ENCODE measurements at regions of chr19 and their contacts with region 1.

Region 1: DNA sequence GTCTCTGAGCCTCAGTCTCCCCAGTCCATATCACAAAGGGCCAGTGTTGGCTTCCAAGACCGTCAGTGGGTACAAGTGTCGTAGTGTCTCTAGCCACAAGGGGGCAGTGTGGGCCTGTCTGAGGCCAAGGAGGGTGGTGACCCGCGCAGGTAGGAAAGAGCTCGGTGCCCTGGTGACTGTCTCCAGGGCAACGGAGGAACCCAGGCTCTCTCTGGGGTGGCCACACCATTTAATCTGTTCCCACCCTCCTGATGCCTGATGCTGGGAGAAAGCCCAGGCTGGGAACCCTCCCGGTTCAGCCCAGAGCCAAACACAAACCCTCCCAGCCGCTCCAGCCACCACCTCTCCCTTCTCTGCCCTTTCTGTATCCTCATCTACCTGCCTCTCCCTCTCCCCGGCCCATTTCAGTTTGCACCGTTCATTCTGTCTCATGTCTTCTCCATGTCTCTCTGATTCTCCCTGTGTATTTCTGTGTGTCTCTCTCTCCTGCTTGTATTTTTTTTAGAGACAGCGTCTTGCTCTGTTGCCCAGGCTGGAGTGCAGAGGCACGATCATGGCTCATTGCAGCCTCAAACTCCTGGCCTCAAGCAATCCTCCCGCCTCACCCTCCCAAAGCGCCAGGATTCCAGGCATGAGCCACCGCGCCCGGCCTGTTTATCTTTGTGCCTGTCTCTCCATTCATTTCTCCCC is 17.5 kb upstream of the MEIS3 start:
- DNase-seq: no peak
- H3K4me3 ChIP-seq: no peak overlapping the region
- H3K27ac ChIP-seq: no peak overlapping the region
- H3K4me1 ChIP-seq: peaks cover 0 to 8% (median 0%) of the 10 kb centered on the region in 3 donors
- H3K27me3 ChIP-seq: peaks cover 0 to 89% (median 0%) of the 10 kb centered on the region in 4 donors
- CTCF ChIP-seq: peak; percentile 80 to 94 (median 90)
- POLR2A ChIP-seq: no peak

Region 2: DNA sequence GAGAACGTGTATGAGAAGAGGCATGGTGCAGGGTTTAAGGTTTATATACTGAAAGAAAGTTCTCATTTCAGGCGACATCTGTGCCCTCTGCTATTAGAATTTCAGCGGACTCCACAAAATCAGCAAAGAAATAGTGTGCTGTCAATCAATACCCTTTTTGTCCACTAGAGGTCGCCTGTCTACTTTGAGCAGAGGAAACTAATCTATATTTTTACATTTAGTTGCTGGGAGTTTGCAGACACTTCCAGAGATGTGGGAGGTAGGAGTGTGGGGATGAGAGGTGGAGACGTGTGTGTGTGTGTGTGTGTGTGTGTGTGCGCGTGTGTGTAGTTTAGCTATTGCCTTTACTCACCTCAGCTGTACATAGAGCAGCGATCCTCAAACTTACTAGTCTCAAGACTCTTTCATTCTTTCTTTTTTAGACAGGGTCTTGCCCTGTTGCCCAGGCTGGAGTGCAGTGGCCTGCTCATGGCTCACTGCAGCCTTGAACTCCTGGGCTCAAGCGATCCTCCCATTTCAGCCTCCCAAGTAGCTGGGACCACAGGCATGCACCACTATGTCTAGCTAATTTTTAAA is 152.4 kb before region 1 on chr19:
- intact Hi-C with region 1: no loop called
- DNase-seq: no peak
- H3K4me3 ChIP-seq: no peak overlapping the region
- H3K27ac ChIP-seq: no peak overlapping the region
- H3K4me1 ChIP-seq: peaks cover under 1 to 9% (median 5%) of the 10 kb centered on the region in 3 donors
- H3K27me3 ChIP-seq: no peaks in the 10 kb centered on the region
- CTCF ChIP-seq: peak; percentile 84 to 94 (median 92)
- POLR2A ChIP-seq: no peak

Region 3: GRCh38 chr19:47391510-47392223 is 45.2 kb before region 1 on chr19:
- intact Hi-C with region 1: no loop called
- DNase-seq: peak; percentile 21
- H3K4me3 ChIP-seq: no peak overlapping the region
- H3K27ac ChIP-seq: no peak overlapping the region
- H3K4me1 ChIP-seq: no peaks in the 10 kb centered on the region
- H3K27me3 ChIP-seq: no peaks in the 10 kb centered on the region
- CTCF ChIP-seq: peak; percentile 68 to 91 (median 82)
- POLR2A ChIP-seq: no peak

Region 4: GRCh38 chr19:47514869-47515588 is 78.2 kb after region 1 on chr19 and contains the start of gene NAPA:
- intact Hi-C with region 1: loop called (anchors 5 kb)
- DNase-seq: peak; percentile 100
- H3K4me3 ChIP-seq: peak within 1 kb of the TSS; percentile 79 to 99 (median 90)
- H3K27ac ChIP-seq: peak within 1 kb of the TSS; percentile 97 to 99 (median 98)
- H3K4me1 ChIP-seq: peaks cover 36 to 52% (median 41%) of the 10 kb centered on the region in 3 donors
- H3K27me3 ChIP-seq: no peaks in the 10 kb centered on the region
- CTCF ChIP-seq: peak in 1 of 6 experiments; percentile 11
- POLR2A ChIP-seq: peak in 3 of 4 donors; percentile 72 to 98 (median 94)
- total RNA-seq, gene NAPA: 106 to 178 (median 125) TPM

Region 5: DNA sequence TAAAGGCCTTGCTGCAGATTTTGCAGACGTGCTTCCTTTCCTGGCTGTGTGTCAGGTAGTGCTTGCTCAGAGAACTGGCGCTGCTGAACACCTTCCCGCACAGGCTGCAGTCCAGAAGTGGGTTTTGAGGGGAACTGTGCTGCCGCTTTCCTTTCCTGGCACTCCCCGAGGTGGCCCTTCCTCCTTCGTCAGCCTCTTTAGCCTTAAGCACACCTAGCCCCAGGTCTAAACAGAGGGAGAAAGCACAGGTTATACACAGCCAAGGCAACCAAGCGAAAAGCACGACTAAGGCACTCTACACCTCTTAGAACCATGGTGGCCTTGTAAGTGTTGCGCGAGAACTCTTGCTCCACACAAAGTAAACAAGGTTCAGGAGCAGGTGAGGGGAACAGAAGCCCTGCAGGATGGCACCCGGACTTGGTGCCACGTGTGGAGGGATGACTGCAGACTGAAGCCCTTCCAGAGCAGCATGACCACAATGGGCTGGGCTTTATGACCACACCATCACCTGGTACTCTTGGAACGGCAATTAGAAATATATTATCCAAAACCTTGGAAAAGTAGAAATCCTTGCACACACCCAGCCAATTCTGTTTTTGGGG is 112.5 kb after region 1 on chr19:
- intact Hi-C with region 1: no loop called
- DNase-seq: no peak
- H3K4me3 ChIP-seq: no peak overlapping the region
- H3K27ac ChIP-seq: no peak overlapping the region
- H3K4me1 ChIP-seq: peaks cover 0 to 16% (median 8%) of the 10 kb centered on the region in 3 donors
- H3K27me3 ChIP-seq: peaks cover 0 to 23% (median 0%) of the 10 kb centered on the region in 4 donors
- CTCF ChIP-seq: no peak
- POLR2A ChIP-seq: no peak

Region 6: DNA sequence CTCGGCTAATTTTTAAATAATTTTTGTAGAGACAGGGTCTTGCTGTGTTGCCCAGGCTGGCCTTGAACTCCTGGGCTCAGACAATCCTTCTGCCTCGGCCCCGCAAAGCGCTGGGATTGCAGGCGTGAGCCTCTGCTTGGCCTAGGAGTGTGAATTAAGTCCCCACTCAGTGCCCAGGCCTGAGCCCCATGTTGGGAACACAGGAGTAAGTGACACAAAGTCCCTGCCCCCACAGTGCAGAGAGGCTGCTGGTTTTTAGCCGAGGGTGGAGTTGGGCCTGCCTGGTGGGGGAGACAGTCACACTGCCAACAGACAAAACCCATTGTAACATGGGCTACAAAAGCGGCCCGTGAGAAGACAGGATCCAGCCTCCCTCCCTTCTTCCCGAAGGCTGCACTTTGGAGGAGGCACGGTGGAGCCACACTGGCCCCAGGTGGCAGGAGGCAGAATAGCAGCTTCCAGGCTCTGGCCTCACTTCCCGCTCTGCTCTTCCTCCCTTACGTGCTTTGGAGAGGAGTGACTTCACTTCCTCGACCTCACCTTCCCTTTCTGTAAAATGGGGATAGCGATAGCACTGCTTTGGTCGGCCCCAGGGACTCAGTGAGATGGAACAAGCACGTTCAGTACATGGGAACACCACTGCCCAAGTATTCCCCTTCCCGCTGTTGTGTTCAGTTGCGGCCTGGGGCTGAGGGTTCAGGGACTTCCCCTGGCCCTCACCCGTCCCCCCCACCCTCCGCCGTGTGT is 261.2 kb after region 1 on chr19:
- intact Hi-C with region 1: loop called (anchors 5 kb)
- DNase-seq: no peak
- H3K4me3 ChIP-seq: no peak overlapping the region
- H3K27ac ChIP-seq: peak overlapping the region; percentile 20 to 76 (median 60)
- H3K4me1 ChIP-seq: peaks cover 0 to 11% (median 5%) of the 10 kb centered on the region in 3 donors
- H3K27me3 ChIP-seq: no peaks in the 10 kb centered on the region
- CTCF ChIP-seq: peak; percentile 89 to 99 (median 96)
- POLR2A ChIP-seq: no peak

Region 7: GRCh38 chr19:47790398-47790814 is 353.5 kb after region 1 on chr19:
- intact Hi-C with region 1: loop called (anchors 10 kb)
- DNase-seq: no peak
- H3K4me3 ChIP-seq: no peak overlapping the region
- H3K27ac ChIP-seq: no peak overlapping the region
- H3K4me1 ChIP-seq: peaks cover 0 to 31% (median 6%) of the 10 kb centered on the region in 3 donors
- H3K27me3 ChIP-seq: no peaks in the 10 kb centered on the region
- CTCF ChIP-seq: peak; percentile 62 to 88 (median 72)
- POLR2A ChIP-seq: no peak

Measured in esophagus squamous epithelium (tissue), 5 donors.